SK-N-SH (cell line): ENCODE measurements at regions of chr1 and their contacts with region 1.

Region 1: DNA sequence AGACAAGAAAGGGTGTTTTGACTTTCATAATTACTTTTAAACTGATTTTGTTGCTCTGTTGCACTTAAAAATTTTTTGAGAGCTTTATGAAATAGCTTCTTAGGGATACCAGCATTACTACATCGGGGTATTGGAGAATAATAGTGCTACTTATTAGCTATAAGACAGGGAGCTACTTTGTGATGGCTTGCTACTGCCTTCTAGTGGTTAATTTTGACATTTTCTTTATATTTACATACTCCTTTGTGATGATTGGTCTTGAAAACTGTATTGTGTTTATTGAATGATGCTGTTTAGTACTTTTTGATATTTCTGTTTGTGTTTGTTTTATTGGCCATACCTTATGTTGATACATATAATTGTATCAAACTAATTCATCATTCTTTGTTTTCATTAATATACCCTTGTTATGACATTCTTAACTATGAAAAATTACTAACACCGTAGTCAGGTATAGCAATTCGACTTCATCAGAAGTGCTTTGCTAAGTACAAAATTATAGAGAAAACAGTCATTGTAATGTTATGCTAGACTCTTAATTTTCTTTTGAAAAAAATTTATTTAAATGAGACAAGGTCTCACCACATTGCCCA is 85.5 kb downstream of the CLIC4 start:
- DNase-seq: peak; percentile 53
- H3K4me3 ChIP-seq: peak overlapping the region in 1 of 2 experiments; percentile 18; a peak in 1 of 4 replicates
- H3K27ac ChIP-seq: peak overlapping the region in 1 of 2 experiments; percentile 28; a peak in 1 of 4 replicates
- H3K4me1 ChIP-seq: peaks cover 28 to 37% of the 10 kb centered on the region in 2 experiments
- H3K27me3 ChIP-seq: no peaks in the 10 kb centered on the region
- CTCF ChIP-seq: peak; percentile 94
- EP300 ChIP-seq: no peak
- RAD21 ChIP-seq: peak; percentile 94

Region 2: DNA sequence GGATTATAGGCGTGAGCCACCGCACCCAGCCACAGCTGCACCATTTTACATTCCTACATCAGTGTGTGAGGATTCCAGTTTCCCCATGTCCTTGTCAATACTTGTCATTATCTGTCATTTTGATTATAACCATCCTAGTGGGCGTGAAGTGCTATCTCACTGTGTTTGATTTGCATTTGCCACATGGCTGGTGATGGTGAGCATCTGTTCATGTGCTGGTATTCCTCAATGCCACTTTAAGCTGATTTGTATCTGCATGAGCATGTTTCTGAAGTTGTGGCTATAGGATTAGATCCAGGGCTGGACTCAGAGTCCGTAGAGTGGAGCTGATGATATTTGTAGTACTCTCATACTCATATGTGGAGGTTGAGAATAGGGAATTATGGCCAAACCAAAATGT is 151.1 kb before region 1 on chr1:
- CTCF ChIA-PET with region 1: interaction called, 28 read pairs
- POLR2A ChIA-PET with region 1: no interaction called
- DNase-seq: peak; percentile 79
- H3K4me3 ChIP-seq: no peak overlapping the region
- H3K27ac ChIP-seq: no peak overlapping the region
- H3K4me1 ChIP-seq: peaks cover 4 to 7% of the 10 kb centered on the region in 2 experiments; a peak in 1 of 4 replicates
- H3K27me3 ChIP-seq: no peaks in the 10 kb centered on the region
- CTCF ChIP-seq: no peak
- EP300 ChIP-seq: peak in 1 of 2 experiments; percentile 97; a peak in 2 of 4 replicates
- RAD21 ChIP-seq: no peak

Region 3: DNA sequence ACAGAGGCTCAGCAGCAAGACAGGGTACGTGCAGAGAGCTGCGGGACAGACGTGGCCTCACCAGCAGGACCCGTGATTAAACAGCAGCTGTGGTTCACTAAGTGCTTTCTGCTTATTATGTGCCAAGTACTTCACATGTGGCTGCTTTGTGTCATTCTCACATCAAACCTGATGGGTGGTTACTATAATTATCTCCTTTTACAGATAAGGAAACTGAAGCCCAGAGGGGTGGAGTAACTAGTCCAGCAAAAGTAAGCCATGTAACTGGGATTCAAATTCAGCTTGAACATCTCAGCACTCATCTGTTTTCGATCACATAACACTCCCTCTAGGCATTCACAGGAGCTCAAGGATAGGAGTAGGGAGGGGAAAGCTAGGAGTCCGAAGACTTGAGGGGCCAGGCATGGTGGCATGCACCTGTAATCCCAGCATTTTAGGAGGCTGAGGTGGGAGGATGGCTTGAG is 136.4 kb before region 1 on chr1:
- CTCF ChIA-PET with region 1: interaction called, 206 read pairs
- POLR2A ChIA-PET with region 1: interaction called, 4 read pairs
- DNase-seq: peak; percentile 62
- H3K4me3 ChIP-seq: no peak overlapping the region
- H3K27ac ChIP-seq: peak overlapping the region in 1 of 2 experiments; percentile 51; a peak in 1 of 4 replicates
- H3K4me1 ChIP-seq: peaks cover 0 to 24% of the 10 kb centered on the region in 2 experiments; a peak in 1 of 4 replicates
- H3K27me3 ChIP-seq: no peaks in the 10 kb centered on the region
- CTCF ChIP-seq: no peak
- EP300 ChIP-seq: peak in 1 of 2 experiments; percentile 84; a peak in 2 of 4 replicates
- RAD21 ChIP-seq: no peak

Region 4: DNA sequence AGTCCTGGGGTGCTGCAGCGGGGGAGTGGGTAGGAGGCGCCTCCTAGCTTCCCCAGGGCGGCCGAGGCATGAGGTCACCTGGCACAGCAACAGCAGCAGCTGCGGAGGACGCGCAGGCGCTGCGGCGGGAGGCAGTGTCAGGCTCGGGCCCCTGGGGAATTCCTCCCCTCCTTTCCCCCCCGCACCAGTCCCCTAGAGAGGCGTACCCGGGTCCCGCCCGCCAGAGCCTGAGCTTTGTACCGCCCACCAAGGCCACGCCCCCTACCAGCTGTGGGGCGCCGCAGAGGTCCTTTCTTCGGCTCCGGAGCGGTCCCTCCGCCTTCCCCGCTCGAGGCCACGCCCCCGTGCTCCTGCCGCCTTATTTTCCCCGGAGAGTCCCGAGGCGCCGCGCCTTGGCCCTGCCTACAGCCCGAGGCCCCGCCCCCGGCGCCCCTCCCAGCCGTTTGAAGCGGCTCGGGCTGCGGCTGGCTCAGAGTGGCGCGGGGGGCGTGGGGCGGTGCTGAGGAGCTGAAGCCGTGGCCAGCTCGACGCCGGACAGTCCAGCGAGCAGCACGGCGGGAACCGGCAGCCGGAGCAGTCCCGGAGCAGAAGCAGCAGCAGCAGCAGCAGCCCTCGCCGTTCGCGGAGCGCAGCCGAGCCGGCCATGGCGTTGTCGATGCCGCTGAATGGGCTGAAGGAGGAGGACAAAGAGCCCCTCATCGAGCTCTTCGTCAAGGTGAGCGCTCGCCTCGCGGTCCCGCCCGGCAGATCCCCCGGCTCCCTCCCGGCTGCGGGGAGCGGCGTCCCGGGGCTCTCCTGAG is 85.7 kb before region 1 on chr1 and contains the start of gene CLIC4:
- CTCF ChIA-PET with region 1: interaction called, 31 read pairs
- POLR2A ChIA-PET with region 1: interaction called, 4 read pairs
- DNase-seq: peak; percentile 97
- H3K4me3 ChIP-seq: peak within 1 kb of the TSS; percentile 70 to 88
- H3K27ac ChIP-seq: peak within 1 kb of the TSS; percentile 79 to 85
- H3K4me1 ChIP-seq: peaks cover 10 to 21% of the 10 kb centered on the region in 2 experiments; a peak in 2 of 4 replicates
- H3K27me3 ChIP-seq: no peaks in the 10 kb centered on the region
- CTCF ChIP-seq: no peak
- EP300 ChIP-seq: peak in 1 of 2 experiments; percentile 72; a peak in 1 of 4 replicates
- RAD21 ChIP-seq: peak; percentile 39
- polyA plus RNA-seq, gene CLIC4: 66.4 and 84.4 TPM in 2 replicates

Region 5: DNA sequence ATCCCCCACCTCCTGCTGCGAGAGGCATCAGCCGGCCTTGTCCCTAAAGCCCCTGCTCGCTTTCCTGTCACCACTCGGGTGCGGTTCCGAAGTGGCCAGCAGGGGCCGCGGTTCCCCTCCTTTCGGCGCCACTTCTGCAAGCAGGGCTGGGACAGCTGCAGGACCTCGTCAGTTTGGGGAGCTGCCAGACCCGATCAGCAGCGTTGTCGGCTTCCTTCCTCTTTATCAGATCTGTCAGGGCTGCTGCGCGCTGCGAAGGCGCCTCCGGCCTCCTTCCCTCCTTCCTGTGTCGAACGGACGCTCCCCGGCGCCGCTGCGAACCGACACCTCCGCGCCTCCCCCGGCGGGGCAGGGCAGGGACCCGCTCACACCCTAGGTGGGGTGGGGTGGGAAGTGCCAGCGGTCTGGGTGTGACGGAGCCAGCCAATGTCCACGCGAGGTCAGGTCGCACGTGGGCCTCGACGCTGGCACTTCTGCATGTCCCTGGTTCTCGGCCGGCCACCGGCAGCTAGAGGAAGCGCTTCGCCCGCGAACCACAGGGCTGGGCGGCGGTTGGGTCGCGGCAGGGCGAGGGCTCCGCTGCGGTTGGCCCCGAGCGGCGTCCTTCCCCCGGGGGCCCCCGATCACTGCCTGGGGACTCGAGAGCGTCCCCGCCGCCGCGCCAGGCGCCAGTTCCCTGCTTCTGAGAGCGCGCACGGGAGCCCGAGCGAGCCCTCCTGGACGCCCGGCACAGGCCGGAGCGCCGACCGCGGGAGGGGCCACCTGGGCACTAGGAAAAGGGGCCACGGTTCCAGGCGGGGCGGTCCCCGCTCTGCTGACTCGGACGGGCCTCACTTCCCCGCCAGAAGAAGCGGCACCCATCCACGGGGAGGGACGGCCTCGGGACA is 17.5 kb after region 1 on chr1:
- CTCF ChIA-PET with region 1: interaction called, 23 read pairs
- POLR2A ChIA-PET with region 1: no interaction called
- DNase-seq: peak; percentile 91
- H3K4me3 ChIP-seq: peak overlapping the region; percentile 37 to 55; a peak in 3 of 4 replicates
- H3K27ac ChIP-seq: no peak overlapping the region
- H3K4me1 ChIP-seq: peaks cover 0 to 10% of the 10 kb centered on the region in 2 experiments; a peak in 1 of 4 replicates
- H3K27me3 ChIP-seq: no peaks in the 10 kb centered on the region
- CTCF ChIP-seq: peak; percentile 86
- EP300 ChIP-seq: no peak
- RAD21 ChIP-seq: peak; percentile 88